ENCODE measurements at regions of chr2 and their contacts with region 1.

Region 1: GRCh38 chr2:33086400-33087015 is 139.8 kb downstream of the LTBP1 start:
- DNase-seq: peak in 1 of 2 donors; percentile 66
- ATAC-seq: peak; percentile 41 to 63 (median 54)
- H3K4me3 ChIP-seq: no peak overlapping the region
- H3K27ac ChIP-seq: peak overlapping the region in 6 of 10 donors; percentile 2 to 59 (median 30)
- H3K4me1 ChIP-seq: peaks cover 5 to 60% (median 34%) of the 10 kb centered on the region in 9 donors
- H3K27me3 ChIP-seq: no peaks in the 10 kb centered on the region
- CTCF ChIP-seq: peak in 6 of 9 donors; percentile 23 to 55 (median 38)

Region 2: GRCh38 chr2:33589444-33589843 is 502.9 kb after region 1 on chr2:
- intact Hi-C with region 1: loop called in 1 of 10 experiments (anchors 5 kb)
- DNase-seq: no peak
- ATAC-seq: peak in 1 of 8 donors; percentile 5
- H3K4me3 ChIP-seq: no peak overlapping the region
- H3K27ac ChIP-seq: peak overlapping the region in 3 of 10 donors; percentile 8 to 27 (median 12)
- H3K4me1 ChIP-seq: peaks cover 0 to 37% (median 11%) of the 10 kb centered on the region in 9 donors
- H3K27me3 ChIP-seq: no peaks in the 10 kb centered on the region
- CTCF ChIP-seq: no peak